ENCODE measurements at regions of chr20 and their contacts with region 1.

Region 1: GRCh38 chr20:7926767-7927166 is 13.5 kb downstream of the HAO1 start:
- DNase-seq: peak; percentile 24
- H3K4me3 ChIP-seq: no peak overlapping the region
- H3K27ac ChIP-seq: no peak overlapping the region
- H3K4me1 ChIP-seq: no peaks in the 10 kb centered on the region
- H3K27me3 ChIP-seq: peaks cover 19% of the 10 kb centered on the region
- CTCF ChIP-seq: peak; percentile 64

Region 2: DNA sequence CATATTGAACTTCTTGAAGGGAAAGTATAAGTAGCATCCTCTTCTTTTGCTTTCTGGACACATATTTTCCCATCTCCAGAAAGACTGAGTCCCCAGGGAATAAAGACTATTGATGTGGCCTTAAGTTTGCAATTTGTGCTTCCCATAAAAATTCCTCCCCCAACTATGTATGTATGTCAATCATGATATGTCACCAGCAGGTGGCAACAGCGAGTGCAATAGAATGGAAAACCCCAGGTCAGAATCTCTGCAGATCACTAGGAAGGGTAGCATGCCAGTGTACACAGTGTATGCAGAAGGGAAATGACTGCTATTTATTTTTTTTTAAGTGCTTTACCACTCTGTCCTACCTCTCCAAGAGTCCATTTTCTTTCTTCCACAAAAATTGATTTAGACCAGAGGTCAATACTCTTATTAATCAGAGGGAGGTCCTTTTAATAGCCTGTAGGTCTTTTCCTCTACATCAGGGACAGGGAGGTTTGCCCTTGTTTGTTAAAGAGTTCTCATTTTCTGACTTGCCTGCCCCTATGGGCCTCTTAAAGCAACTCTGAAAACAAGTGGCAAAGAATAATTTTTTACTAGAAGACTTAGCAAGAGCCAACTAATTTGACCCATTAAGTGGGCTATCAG is 1097.9 kb before region 1 on chr20:
- CTCF ChIA-PET with region 1: no interaction called
- POLR2A ChIA-PET with region 1: no interaction called
- intact Hi-C with region 1: loop called (anchors 10 kb)
- DNase-seq: peak; percentile 67
- H3K4me3 ChIP-seq: no peak overlapping the region
- H3K27ac ChIP-seq: no peak overlapping the region
- H3K4me1 ChIP-seq: no peaks in the 10 kb centered on the region
- H3K27me3 ChIP-seq: no peaks in the 10 kb centered on the region
- CTCF ChIP-seq: peak; percentile 75

Region 3: DNA sequence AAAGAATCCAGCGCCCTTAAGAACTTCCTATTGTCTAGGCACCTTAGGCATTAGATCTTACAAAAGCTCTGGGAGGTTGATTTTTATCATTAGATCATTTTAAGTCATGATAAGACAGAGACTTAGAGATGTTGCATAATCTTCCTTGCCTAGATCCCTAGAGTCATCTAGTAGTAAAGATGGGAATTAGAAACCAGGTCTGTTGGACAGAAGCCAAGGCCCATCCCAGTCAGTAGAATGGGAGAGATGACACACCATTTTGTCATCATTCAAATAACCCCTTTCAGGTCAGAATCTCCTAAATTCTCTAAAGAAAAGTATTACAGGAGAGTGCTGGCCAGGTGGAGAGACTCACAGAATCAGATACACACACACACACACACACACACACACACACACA is 580.2 kb before region 1 on chr20:
- CTCF ChIA-PET with region 1: no interaction called
- POLR2A ChIA-PET with region 1: no interaction called
- intact Hi-C with region 1: no loop called
- DNase-seq: no peak
- H3K4me3 ChIP-seq: no peak overlapping the region
- H3K27ac ChIP-seq: no peak overlapping the region
- H3K4me1 ChIP-seq: no peaks in the 10 kb centered on the region
- H3K27me3 ChIP-seq: no peaks in the 10 kb centered on the region
- CTCF ChIP-seq: no peak

Measured in A673 (cell line).